WTC11 (cell line): ENCODE measurements at regions of chr17 and their contacts with region 1.

Region 1: DNA sequence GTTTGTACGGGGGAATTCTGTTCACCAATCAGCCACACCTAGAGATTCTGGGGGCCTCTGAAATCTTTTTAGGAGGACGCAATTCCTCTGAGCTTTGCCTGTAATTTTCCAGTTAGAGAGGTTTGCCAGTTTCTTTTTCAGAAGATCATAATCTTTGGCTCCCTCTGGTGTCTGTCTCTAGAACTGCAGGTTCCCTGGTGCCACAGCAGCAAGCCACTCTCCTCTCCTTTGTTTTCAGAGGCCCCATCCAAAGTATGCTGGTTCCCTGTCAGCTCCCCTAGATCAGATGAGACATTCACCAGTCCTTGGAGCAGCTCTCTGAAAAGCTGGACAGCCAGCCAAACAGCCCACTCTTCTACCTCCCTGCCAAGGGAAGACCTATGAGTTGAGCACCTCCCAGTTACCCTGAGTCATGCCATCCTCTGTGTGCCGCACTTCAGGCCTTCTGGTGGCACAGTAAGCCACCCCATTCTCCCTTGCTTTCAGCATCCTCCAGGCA is 36.1 kb downstream of the RNF112 start:
- DNase-seq: peak; percentile 80
- ATAC-seq: peak; percentile 90
- H3K4me3 Mint-ChIP-seq: no peak overlapping the region
- H3K27ac Mint-ChIP-seq: peak overlapping the region; percentile 63
- H3K4me1 Mint-ChIP-seq: peaks cover 25% of the 10 kb centered on the region
- H3K27me3 Mint-ChIP-seq: peaks cover 10% of the 10 kb centered on the region
- CTCF ChIP-seq: peak; percentile 99

Region 2: GRCh38 chr17:19384701-19385411 is 62.3 kb before region 1 on chr17:
- CTCF ChIA-PET with region 1: interaction called, 16 read pairs
- POLR2A ChIA-PET with region 1: no interaction called
- DNase-seq: no peak
- ATAC-seq: no peak
- H3K4me3 Mint-ChIP-seq: no peak overlapping the region
- H3K27ac Mint-ChIP-seq: peak overlapping the region; percentile 88
- H3K4me1 Mint-ChIP-seq: peaks cover 34% of the 10 kb centered on the region
- H3K27me3 Mint-ChIP-seq: no peaks in the 10 kb centered on the region; the same call in 1 of the 2 replicates
- CTCF ChIP-seq: no peak

Region 3: DNA sequence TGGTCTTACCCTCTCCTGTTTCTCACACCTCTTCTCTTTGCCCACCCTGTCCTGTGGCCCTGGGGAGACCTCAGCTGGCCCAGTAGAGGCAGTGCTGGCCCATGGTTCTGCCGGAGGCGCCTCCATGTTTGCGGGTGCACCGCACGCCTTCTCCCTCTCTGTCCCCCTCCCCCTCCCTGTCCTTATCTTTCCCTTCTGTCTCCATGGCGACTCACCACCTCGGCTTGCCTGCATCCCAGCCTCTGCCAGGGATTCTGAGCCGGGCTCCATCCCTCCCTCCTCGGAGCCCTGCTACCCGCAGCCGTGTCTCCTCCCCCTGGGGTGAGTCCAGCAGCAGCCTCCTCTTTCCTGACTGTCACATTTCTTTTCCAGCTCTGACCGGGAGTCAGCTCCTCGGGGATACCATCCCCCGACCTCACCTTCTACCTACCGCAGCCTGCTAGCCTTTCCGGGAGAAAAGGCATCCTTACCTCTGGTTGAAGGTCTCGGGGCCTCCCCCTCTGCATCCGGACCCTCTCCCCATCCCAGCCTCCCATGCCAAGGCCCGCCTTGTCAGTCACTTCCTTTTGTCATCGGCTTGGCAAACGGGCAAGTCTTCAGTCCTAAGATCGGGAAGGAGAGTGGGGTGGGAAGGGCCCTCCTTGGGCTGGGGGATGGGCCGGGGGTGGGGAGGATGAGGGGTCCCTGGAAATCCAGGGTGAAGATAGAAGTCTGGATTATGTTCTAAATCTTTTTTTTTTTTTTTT is 36.1 kb before region 1 on chr17 and contains the start of gene RNF112:
- CTCF ChIA-PET with region 1: interaction called, 10 read pairs
- POLR2A ChIA-PET with region 1: no interaction called
- DNase-seq: no peak
- ATAC-seq: peak; percentile 57
- H3K4me3 Mint-ChIP-seq: peak within 1 kb of the TSS; percentile 45
- H3K27ac Mint-ChIP-seq: no peak within 1 kb of the TSS; the same call in 1 of the 2 replicates
- H3K4me1 Mint-ChIP-seq: peaks cover 21% of the 10 kb centered on the region
- H3K27me3 Mint-ChIP-seq: no peaks in the 10 kb centered on the region
- CTCF ChIP-seq: no peak
- total RNA-seq, gene RNF112: 4.5 to 5.1 TPM (median 4.9 TPM) in 3 replicates

Region 4: GRCh38 chr17:19433727-19434340 is 13.3 kb before region 1 on chr17:
- CTCF ChIA-PET with region 1: interaction called, 21 read pairs
- POLR2A ChIA-PET with region 1: no interaction called
- DNase-seq: no peak
- ATAC-seq: peak; percentile 54
- H3K4me3 Mint-ChIP-seq: no peak overlapping the region; the same call in 1 of the 2 replicates
- H3K27ac Mint-ChIP-seq: peak overlapping the region; percentile 60
- H3K4me1 Mint-ChIP-seq: peaks cover 59% of the 10 kb centered on the region
- H3K27me3 Mint-ChIP-seq: no peaks in the 10 kb centered on the region
- CTCF ChIP-seq: no peak

Region 5: DNA sequence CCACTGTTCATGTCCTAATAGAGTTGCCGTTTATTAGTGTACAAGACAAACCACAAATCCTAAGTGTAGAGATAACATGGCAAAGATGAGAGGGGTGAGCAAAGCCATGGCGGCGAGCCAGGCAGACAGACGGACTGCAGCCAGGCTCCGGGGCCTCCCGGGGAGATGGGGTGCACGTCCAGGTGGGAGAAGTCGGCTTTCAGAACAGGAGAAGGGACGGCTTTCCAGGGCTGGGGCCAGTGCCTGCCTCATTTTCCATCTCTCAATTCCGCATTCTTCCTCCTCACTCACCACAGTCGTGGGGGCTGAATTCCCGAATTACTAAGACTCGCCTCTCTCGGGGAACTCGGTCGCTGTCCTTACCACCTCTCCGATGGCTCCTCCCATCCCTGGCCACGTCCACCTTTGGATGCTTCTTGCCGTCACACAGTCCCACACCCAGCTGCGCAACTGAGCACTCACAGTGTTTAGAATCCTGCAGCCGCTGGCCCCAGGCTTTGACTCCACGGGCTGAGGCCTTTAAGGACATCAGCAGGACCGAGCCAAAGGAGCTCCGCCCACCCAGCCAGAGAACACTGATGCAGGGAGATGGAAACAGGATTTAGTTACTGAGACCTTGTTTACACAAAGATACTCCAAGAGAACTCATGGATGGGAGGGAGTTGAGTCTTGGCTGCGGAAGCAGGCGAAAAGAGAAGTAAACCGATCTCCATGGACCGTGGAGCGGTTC is 23.6 kb after region 1 on chr17:
- CTCF ChIA-PET with region 1: interaction called, 13 read pairs
- POLR2A ChIA-PET with region 1: no interaction called
- DNase-seq: peak; percentile 40
- ATAC-seq: peak; percentile 65
- H3K4me3 Mint-ChIP-seq: no peak overlapping the region
- H3K27ac Mint-ChIP-seq: peak overlapping the region; percentile 90
- H3K4me1 Mint-ChIP-seq: peaks cover 30% of the 10 kb centered on the region
- H3K27me3 Mint-ChIP-seq: no peaks in the 10 kb centered on the region
- CTCF ChIP-seq: no peak

Region 6: DNA sequence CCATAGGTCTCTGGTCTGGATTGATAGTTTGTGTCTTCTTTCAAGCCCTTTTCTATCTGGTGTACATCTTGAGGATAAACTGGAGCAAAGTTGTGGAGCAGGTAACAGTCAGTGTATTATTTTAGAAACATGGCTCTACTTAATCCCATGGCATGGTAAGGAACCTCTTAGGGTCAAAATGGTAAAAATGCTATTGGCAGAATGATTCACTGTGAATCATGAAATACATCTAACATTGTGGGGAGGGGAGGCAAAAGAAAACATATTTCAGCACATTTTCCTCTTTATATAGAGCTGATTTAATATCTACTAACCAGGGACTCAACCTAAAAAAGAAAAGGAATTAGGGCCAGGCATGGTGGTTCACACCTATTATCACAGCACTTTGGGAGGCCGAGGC is 183.5 kb after region 1 on chr17:
- CTCF ChIA-PET with region 1: no interaction called
- POLR2A ChIA-PET with region 1: no interaction called
- DNase-seq: no peak
- ATAC-seq: no peak
- H3K4me3 Mint-ChIP-seq: no peak overlapping the region
- H3K27ac Mint-ChIP-seq: no peak overlapping the region
- H3K4me1 Mint-ChIP-seq: no peaks in the 10 kb centered on the region
- H3K27me3 Mint-ChIP-seq: no peaks in the 10 kb centered on the region; the same call in 1 of the 2 replicates
- CTCF ChIP-seq: no peak